AG04449 (cell line): ENCODE measurements at regions of chr13 and their contacts with region 1.

Region 1: DNA sequence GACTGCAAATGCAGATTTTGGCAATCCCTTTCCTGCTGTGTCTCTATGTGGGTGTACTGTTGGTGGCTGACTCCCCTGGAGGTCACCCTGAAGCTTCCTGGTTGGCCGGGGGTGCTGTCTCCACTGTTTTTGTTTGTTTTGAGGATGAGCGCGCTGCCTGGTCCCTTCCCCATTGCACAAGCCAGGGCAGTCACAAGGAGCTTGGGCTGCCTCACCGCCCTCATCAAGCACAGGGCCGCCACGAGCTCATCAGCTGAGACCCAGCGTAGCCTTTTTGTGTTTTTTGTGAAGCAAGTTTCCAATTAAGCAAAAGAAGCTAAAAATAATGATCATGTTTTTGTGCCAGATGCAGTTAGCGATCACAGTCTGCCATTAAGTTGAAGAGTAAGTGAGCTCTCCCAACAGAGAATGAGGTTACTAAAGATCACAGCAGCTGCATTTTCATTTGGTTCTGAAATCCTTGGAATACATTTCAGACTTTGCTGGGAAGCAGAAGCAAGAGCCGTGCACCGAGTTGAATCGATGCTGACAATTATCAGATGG is 57.8 kb downstream of the GGACT start:
- DNase-seq: no peak
- H3K4me3 ChIP-seq: no peak overlapping the region
- CTCF ChIP-seq: no peak

Region 2: GRCh38 chr13:100221166-100221565 is 309.6 kb before region 1 on chr13:
- CTCF ChIA-PET with region 1: no interaction called
- POLR2A ChIA-PET with region 1: no interaction called
- DNase-seq: no peak
- H3K4me3 ChIP-seq: no peak overlapping the region
- CTCF ChIP-seq: no peak

Region 3: DNA sequence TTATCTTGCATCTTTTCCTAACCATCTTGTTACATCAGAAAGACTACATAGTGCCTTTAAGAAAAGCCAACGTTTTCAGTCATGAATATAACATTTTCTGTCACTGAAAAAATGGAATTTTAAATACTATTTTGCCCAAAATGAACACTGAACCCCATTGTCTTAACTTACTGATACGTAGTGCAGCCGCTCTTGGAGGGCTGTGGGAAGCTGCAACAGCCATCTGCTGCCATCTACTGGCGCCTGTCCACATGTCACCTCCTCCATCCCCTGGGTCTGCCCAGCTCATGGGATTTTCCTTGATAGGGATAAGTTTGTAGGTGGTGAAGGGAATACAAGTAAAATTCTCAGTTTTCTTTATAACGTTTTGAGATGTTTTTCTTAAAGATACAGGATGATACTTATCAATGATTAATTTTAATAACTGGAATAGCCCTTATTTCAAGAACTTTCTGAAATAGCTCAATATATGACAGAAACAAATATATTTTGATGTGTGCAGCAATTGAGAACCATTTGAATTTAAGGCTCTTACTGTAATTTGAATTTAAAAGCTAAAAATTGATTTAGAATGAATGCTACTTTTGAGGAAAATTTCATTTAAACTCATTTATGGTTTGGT is 15.8 kb before region 1 on chr13:
- CTCF ChIA-PET with region 1: interaction called, 19 read pairs
- POLR2A ChIA-PET with region 1: no interaction called
- DNase-seq: no peak
- H3K4me3 ChIP-seq: no peak overlapping the region
- CTCF ChIP-seq: peak; percentile 92

Region 4: GRCh38 chr13:100542826-100543156 is 12.0 kb after region 1 on chr13:
- CTCF ChIA-PET with region 1: interaction called, 15 read pairs
- POLR2A ChIA-PET with region 1: no interaction called
- DNase-seq: no peak
- H3K4me3 ChIP-seq: no peak overlapping the region
- CTCF ChIP-seq: peak; percentile 33

Region 5: GRCh38 chr13:100650326-100650725 is 119.6 kb after region 1 on chr13:
- CTCF ChIA-PET with region 1: no interaction called
- POLR2A ChIA-PET with region 1: no interaction called
- DNase-seq: no peak
- H3K4me3 ChIP-seq: no peak overlapping the region
- CTCF ChIP-seq: no peak